IMR-90 (cell line): ENCODE measurements at regions of chr3 and their contacts with region 1.

Region 1: DNA sequence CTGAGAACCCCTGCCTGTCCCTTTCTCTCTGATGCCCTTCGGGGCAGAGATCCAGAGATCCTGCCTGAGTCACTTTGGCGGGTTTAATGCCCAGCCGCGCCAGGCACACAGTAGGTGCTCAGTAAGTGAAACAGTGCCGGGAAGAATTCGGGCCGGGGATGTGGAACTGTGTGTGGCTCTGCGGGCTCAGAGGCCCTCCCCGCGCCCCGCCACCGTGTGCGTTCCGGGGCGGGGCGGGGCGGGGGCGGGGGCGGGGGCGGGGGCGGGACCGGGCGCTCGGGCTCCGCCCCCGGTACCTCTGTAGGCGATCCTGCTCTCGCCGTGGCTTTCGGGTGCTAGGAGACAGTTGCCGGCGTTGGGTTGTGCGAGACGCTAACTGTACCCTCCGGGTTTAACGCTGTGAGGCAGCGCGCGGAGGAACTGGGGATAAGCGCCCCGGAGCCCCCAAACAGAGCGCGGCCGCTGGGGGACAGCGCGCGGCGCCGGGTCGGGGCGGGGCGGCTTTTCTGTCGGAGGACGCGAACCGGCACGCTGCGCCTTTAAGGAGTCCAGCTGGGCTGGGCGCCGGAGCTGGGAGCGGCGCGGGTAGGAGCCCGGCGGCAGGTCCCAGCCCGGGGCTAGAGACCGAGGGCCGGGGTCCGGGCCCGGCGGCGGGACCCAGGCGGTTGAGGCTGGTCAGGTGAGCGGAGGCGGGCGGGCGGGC is at the start of gene ABHD6:
- DNase-seq: peak; percentile 58
- ATAC-seq: peak; percentile 90
- H3K4me3 ChIP-seq: peak within 1 kb of the TSS; percentile 99
- H3K27ac ChIP-seq: peak within 1 kb of the TSS; percentile 96
- H3K4me1 ChIP-seq: peaks cover 5% of the 10 kb centered on the region; the same call in 1 of the 2 replicates
- H3K27me3 ChIP-seq: peaks cover 4% of the 10 kb centered on the region; the same call in 1 of the 2 replicates
- CTCF ChIP-seq: peak; percentile 51
- POLR2A ChIP-seq: no peak
- RAD21 ChIP-seq: peak; percentile 55
- total RNA-seq, gene ABHD6: 4.7 and 5.0 TPM in 2 replicates

Region 2: DNA sequence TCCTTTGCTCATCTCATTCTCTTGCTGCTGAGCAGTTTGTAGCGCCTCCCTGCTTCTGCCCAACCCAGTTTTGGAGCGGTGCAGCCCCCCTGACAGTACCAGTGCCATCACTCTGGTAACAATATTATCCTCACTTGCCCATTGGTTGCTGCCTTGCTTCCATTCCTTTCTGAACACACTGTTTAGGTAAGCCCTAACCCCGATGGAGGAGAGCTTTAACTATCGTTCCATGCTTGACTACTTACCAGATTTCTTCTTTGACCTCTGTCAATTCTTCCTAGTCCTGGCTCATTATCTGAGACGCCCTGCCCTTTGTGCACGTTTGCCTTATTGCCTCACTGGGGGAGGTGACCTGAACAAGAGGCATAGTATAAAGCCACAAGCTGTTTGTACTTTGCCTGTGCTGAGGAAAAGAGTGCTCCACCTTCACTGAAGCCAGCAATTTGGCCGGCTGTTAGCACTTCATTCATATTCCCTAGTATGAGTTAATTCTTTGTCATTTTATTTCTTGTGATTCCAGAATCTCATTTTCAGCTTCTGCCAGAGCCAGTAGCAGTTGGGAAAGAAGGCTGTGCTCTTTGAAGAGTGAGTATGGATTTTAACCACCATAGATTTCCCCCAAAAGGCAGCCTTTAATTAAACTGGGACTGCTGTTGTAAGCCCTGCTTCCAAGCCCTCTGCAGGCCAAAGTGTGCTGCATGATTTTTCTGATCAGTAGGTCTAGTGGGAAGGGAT is 12.1 kb after region 1 on chr3:
- CTCF ChIA-PET with region 1: interaction called, 5 read pairs
- POLR2A ChIA-PET with region 1: no interaction called
- dilution Hi-C with region 1: no loop called
- in situ Hi-C with region 1: no loop called
- intact Hi-C with region 1: loop called (anchors 1 kb)
- DNase-seq: no peak
- ATAC-seq: peak; percentile 69
- H3K4me3 ChIP-seq: no peak overlapping the region
- H3K27ac ChIP-seq: no peak overlapping the region
- H3K4me1 ChIP-seq: peaks cover 4% of the 10 kb centered on the region
- H3K27me3 ChIP-seq: no peaks in the 10 kb centered on the region
- CTCF ChIP-seq: peak; percentile 21; the same call in 1 of the 2 replicates
- POLR2A ChIP-seq: no peak
- RAD21 ChIP-seq: no peak

Region 3: GRCh38 chr3:58260261-58260731 is 22.9 kb after region 1 on chr3:
- CTCF ChIA-PET with region 1: no interaction called
- POLR2A ChIA-PET with region 1: interaction called, 25 read pairs
- dilution Hi-C with region 1: no loop called
- in situ Hi-C with region 1: no loop called
- intact Hi-C with region 1: no loop called
- DNase-seq: peak; percentile 93
- ATAC-seq: peak; percentile 87
- H3K4me3 ChIP-seq: no peak overlapping the region
- H3K27ac ChIP-seq: no peak overlapping the region
- H3K4me1 ChIP-seq: peaks cover 9% of the 10 kb centered on the region
- H3K27me3 ChIP-seq: no peaks in the 10 kb centered on the region
- CTCF ChIP-seq: no peak
- POLR2A ChIP-seq: no peak
- RAD21 ChIP-seq: no peak

Region 4: GRCh38 chr3:58332575-58333188 is 95.3 kb after region 1 on chr3 and contains the start of gene PXK:
- CTCF ChIA-PET with region 1: no interaction called
- POLR2A ChIA-PET with region 1: no interaction called
- dilution Hi-C with region 1: no loop called
- in situ Hi-C with region 1: no loop called
- intact Hi-C with region 1: no loop called
- DNase-seq: peak; percentile 70
- ATAC-seq: peak; percentile 87
- H3K4me3 ChIP-seq: peak within 1 kb of the TSS; percentile 91
- H3K27ac ChIP-seq: peak within 1 kb of the TSS; percentile 93
- H3K4me1 ChIP-seq: peaks cover 16% of the 10 kb centered on the region
- H3K27me3 ChIP-seq: no peaks in the 10 kb centered on the region
- CTCF ChIP-seq: peak; percentile 37
- POLR2A ChIP-seq: peak; percentile 32; the same call in 1 of the 2 replicates
- RAD21 ChIP-seq: peak; percentile 46
- total RNA-seq, gene PXK: 14.3 and 15.6 TPM in 2 replicates

Region 5: DNA sequence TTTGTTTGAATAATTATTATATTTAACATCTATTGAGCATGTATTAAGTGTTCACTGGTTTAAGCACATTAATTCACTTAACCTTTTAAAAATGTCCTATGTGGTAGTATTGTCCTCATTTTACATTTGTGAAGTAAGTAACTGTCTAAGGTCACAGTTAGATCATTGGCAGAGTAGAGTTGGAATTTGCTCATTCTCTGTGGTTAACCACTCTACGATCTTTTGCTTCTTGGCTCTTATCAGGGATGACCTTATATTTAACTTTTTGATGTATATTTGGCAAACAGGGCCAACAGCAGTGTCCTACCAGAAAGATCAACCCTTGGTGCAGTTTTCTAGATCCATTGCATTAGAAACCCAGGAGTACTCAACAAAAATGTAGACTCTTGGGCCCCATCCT is 129.3 kb after region 1 on chr3:
- CTCF ChIA-PET with region 1: no interaction called
- POLR2A ChIA-PET with region 1: no interaction called
- dilution Hi-C with region 1: no loop called
- in situ Hi-C with region 1: no loop called
- intact Hi-C with region 1: no loop called
- DNase-seq: peak; percentile 34
- ATAC-seq: peak; percentile 49; the same call in 1 of the 2 replicates
- H3K4me3 ChIP-seq: no peak overlapping the region
- H3K27ac ChIP-seq: no peak overlapping the region
- H3K4me1 ChIP-seq: no peaks in the 10 kb centered on the region
- H3K27me3 ChIP-seq: no peaks in the 10 kb centered on the region
- CTCF ChIP-seq: no peak
- POLR2A ChIP-seq: no peak
- RAD21 ChIP-seq: no peak